CD4-positive, alpha-beta T cell (primary cell): ENCODE measurements at regions of chr7 and their contacts with region 1.

Region 1: DNA sequence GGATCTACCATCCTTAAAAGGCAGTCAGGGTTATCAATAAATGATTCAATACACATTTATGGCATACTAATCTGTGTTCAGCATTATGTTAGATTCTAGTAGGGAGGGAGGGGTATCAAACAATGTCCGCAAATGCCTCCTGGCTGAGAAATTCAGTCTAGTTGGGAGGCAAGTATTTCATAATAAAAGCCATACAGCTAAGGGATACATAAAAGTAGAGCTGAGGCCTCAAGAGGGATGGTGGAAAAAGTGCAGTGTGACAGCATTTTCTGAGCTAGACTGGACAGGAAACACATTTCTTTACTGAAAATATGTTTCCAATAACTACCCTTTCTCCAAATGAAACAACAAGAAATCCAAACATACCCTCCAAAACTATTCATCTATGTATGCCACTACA is 152.8 kb upstream of the LRRN3 start:
- DNase-seq: no peak
- ATAC-seq: no peak
- H3K4me3 ChIP-seq: no peak overlapping the region
- H3K4me3 Mint-ChIP-seq: no peak overlapping the region
- H3K27ac ChIP-seq: no peak overlapping the region
- H3K27ac Mint-ChIP-seq: no peak overlapping the region
- H3K4me1 ChIP-seq: no peaks in the 10 kb centered on the region
- H3K4me1 Mint-ChIP-seq: peaks cover 8% of the 10 kb centered on the region
- H3K27me3 ChIP-seq: no peaks in the 10 kb centered on the region
- H3K27me3 Mint-ChIP-seq: no peaks in the 10 kb centered on the region
- CTCF ChIP-seq: no peak

Region 2: GRCh38 chr7:110888641-110889040 is 49.5 kb before region 1 on chr7:
- CTCF ChIA-PET with region 1: no interaction called
- POLR2A ChIA-PET with region 1: no interaction called
- intact Hi-C with region 1: no loop called
- DNase-seq: no peak
- ATAC-seq: no peak
- H3K4me3 ChIP-seq: no peak overlapping the region
- H3K4me3 Mint-ChIP-seq: no peak overlapping the region
- H3K27ac ChIP-seq: no peak overlapping the region
- H3K27ac Mint-ChIP-seq: no peak overlapping the region
- H3K4me1 ChIP-seq: no peaks in the 10 kb centered on the region
- H3K4me1 Mint-ChIP-seq: no peaks in the 10 kb centered on the region
- H3K27me3 ChIP-seq: no peaks in the 10 kb centered on the region
- H3K27me3 Mint-ChIP-seq: no peaks in the 10 kb centered on the region
- CTCF ChIP-seq: no peak

Region 3: DNA sequence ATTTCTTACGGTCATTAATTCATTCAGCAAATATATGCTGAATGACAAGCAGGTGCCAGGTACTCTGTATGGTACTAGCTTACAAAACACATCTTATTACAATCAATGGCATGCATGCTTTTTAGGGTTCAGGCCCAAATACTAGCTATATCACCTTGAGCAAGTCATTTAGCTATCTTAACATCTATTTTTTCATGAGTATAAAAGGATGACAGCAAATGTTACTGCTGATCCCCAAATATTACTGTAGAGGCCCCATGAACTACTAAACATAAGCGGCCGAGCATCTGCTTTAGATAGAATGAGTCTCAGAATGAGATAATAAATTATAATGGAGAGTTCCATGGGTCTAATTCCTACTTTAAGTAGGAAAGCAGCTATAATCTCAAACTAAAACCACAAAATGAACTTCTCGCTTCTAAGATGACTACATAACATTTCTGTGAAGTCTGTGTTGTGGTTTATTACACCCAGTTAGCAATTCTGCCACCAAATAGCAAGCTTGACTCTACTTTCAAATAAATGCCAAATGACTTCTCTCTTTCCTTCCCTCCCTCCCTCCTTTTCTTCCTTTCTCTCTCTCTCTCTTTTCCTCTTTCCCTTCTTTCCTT is 39.1 kb after region 1 on chr7:
- CTCF ChIA-PET with region 1: no interaction called
- POLR2A ChIA-PET with region 1: interaction called, 4 read pairs
- intact Hi-C with region 1: loop called in 1 of 2 experiments (anchors 1 kb)
- DNase-seq: peak in 3 of 14 experiments; percentile 34 to 38 (median 38)
- ATAC-seq: peak; percentile 64
- H3K4me3 ChIP-seq: no peak overlapping the region
- H3K4me3 Mint-ChIP-seq: peak overlapping the region; percentile 42
- H3K27ac ChIP-seq: no peak overlapping the region
- H3K27ac Mint-ChIP-seq: peak overlapping the region; percentile 80
- H3K4me1 ChIP-seq: no peaks in the 10 kb centered on the region
- H3K4me1 Mint-ChIP-seq: peaks cover 47% of the 10 kb centered on the region
- H3K27me3 ChIP-seq: no peaks in the 10 kb centered on the region
- H3K27me3 Mint-ChIP-seq: no peaks in the 10 kb centered on the region
- CTCF ChIP-seq: no peak